Activated B cell treated with CpG ODN at 0.5 μM for 24 hours (primary cell): ENCODE measurements at regions of chr19 and their contacts with region 1.

Region 1: GRCh38 chr19:20923077-20923871 is at the start of gene ZNF85:
- DNase-seq: peak; percentile 76
- ATAC-seq: peak; percentile 97
- H3K4me3 Mint-ChIP-seq: peak within 1 kb of the TSS; percentile 98
- H3K27ac Mint-ChIP-seq: peak within 1 kb of the TSS; percentile 96
- H3K4me1 Mint-ChIP-seq: peaks cover 13% of the 10 kb centered on the region
- H3K27me3 Mint-ChIP-seq: no peaks in the 10 kb centered on the region
- CTCF ChIP-seq: no peak
- total RNA-seq, gene ZNF85: 15.0 and 18.1 TPM in 2 replicates

Region 2: GRCh38 chr19:20247016-20247683 is 676.1 kb before region 1 on chr19:
- CTCF ChIA-PET with region 1: no interaction called
- POLR2A ChIA-PET with region 1: no interaction called
- intact Hi-C with region 1: loop called (anchors 10 kb)
- DNase-seq: no peak
- ATAC-seq: no peak
- H3K4me3 Mint-ChIP-seq: no peak overlapping the region
- H3K27ac Mint-ChIP-seq: no peak overlapping the region
- H3K4me1 Mint-ChIP-seq: peaks cover 17% of the 10 kb centered on the region
- H3K27me3 Mint-ChIP-seq: no peaks in the 10 kb centered on the region
- CTCF ChIP-seq: no peak

Region 3: DNA sequence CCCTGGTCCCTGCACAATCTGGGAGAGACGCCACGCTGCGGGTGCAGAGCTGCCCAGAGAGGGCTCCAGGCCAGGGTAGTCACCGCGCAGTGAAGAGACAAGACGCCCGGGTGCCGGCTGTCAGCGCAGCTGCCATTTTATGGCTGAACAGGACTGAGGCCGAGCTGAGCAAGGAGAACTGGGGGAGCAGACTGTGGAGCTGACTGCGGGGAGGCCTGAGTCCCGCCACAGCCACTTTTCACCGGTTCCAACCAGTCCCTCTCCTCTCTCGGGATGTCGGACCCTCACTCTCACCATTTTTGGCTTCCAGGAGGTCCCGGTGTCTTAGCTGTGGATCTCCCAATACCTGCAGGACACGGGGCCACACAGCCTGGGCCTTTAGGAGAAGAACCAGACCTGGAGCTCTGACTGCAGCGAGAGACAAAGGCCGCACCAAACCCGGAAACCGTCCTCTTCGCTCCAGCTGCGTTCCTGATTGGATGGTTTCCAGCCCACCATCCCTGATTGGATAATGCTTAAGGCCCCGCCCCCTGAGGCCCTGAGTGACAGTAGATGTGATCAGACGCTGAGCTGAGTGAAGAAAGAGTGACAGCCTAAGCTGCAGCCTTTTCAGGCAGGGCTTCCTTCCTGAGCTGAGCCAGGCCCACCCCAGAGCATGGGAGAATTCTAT is 262.0 kb before region 1 on chr19 and contains the start of gene ZNF626:
- CTCF ChIA-PET with region 1: no interaction called
- POLR2A ChIA-PET with region 1: interaction called, 10 read pairs
- intact Hi-C with region 1: loop called (anchors 1 kb)
- DNase-seq: peak; percentile 80
- ATAC-seq: peak; percentile 98
- H3K4me3 Mint-ChIP-seq: peak within 1 kb of the TSS; percentile 95
- H3K27ac Mint-ChIP-seq: peak within 1 kb of the TSS; percentile 95
- H3K4me1 Mint-ChIP-seq: peaks cover 49% of the 10 kb centered on the region
- H3K27me3 Mint-ChIP-seq: no peaks in the 10 kb centered on the region
- CTCF ChIP-seq: no peak
- total RNA-seq, gene ZNF626: 16.1 and 17.2 TPM in 2 replicates

Region 4: GRCh38 chr19:20999731-21000352 is 76.6 kb after region 1 on chr19:
- CTCF ChIA-PET with region 1: no interaction called
- POLR2A ChIA-PET with region 1: interaction called, 13 read pairs
- intact Hi-C with region 1: loop called (anchors 1 kb)
- DNase-seq: peak; percentile 74
- ATAC-seq: peak; percentile 100
- H3K4me3 Mint-ChIP-seq: peak overlapping the region; percentile 91
- H3K27ac Mint-ChIP-seq: peak overlapping the region; percentile 70
- H3K4me1 Mint-ChIP-seq: peaks cover 6% of the 10 kb centered on the region
- H3K27me3 Mint-ChIP-seq: no peaks in the 10 kb centered on the region
- CTCF ChIP-seq: no peak

Region 5: DNA sequence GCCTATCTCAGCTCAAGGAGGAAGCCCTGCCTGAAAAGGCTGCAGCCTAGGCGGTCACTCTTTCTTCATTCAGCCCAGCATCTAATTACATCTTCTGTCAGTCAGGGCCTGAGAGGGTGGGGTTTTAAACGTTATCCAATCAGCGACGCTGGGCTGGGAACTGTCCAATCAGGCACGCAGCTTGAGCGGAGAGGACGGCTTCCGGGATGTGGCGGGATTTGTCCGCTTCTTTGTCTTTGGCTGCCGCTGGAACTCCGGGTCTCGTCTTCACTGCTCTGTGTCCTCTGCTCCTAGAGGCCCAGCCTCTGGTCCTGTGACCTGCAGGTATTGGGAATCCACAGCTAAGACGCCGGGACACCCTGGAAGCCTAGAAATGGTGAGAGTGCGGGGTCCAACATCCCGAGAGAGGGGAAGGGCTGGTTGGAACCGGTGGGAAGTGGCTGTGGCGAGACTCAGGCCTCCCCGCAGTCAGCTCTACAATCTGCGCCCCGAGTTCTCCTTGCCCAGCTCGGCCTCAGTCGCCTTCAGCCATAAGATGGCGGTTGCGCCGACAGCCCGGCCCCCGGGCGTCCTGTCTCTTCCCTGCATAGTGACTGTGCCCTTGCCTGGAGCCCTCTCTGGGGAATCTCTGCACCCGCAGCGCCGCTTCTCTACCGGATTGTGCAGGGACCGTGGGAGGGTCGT is 435.6 kb after region 1 on chr19 and contains the start of gene ZNF738:
- CTCF ChIA-PET with region 1: no interaction called
- POLR2A ChIA-PET with region 1: interaction called, 7 read pairs
- intact Hi-C with region 1: loop called (anchors 1 kb)
- DNase-seq: peak; percentile 70
- ATAC-seq: peak; percentile 96
- H3K4me3 Mint-ChIP-seq: peak within 1 kb of the TSS; percentile 100
- H3K27ac Mint-ChIP-seq: peak within 1 kb of the TSS; percentile 96
- H3K4me1 Mint-ChIP-seq: peaks cover 13% of the 10 kb centered on the region
- H3K27me3 Mint-ChIP-seq: no peaks in the 10 kb centered on the region
- CTCF ChIP-seq: no peak
- total RNA-seq, gene ZNF738: 18.7 and 22.2 TPM in 2 replicates

Region 6: GRCh38 chr19:21451187-21451586 is 527.9 kb after region 1 on chr19:
- CTCF ChIA-PET with region 1: no interaction called
- POLR2A ChIA-PET with region 1: no interaction called
- intact Hi-C with region 1: no loop called
- DNase-seq: no peak
- ATAC-seq: no peak
- H3K4me3 Mint-ChIP-seq: no peak overlapping the region
- H3K27ac Mint-ChIP-seq: no peak overlapping the region
- H3K4me1 Mint-ChIP-seq: no peaks in the 10 kb centered on the region
- H3K27me3 Mint-ChIP-seq: no peaks in the 10 kb centered on the region
- CTCF ChIP-seq: no peak

Region 7: DNA sequence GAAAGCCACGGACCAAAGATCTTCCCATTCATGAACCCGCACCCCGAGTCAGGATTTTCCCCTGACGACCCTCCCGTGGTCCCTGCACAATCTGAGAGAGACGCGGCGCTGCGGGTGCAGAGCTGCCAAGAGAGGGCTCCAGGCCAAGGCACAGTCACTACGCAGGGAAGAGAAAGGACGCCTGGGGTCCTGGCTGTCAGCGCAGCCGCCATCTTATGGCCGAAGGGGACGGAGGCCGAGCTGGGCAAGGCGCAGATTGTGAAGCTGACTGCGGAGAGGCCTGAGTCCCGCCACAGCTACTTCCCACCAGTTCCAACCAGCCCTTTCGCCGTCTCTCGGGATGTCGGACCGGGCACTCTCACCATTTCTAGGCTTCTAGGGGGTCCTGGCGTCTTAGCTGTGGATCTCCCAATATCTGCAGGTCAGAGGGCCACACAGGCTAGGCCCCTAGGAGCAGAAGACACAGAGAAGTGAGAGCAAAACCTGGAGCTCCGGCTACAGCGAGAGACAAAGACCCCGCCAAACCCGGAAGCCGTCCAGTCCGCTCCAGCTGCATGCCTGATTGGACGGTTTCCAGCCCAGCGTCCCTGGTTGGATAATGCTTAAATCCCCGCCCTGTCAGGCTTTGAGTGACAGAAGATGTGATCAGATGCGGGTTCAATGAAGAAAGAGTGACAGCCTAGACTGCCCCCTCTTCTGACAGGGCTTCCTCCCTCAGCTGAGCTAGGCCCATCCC is 844.0 kb after region 1 on chr19 and contains the start of gene ZNF100:
- CTCF ChIA-PET with region 1: no interaction called
- POLR2A ChIA-PET with region 1: no interaction called
- intact Hi-C with region 1: loop called (anchors 10 kb)
- DNase-seq: peak; percentile 70
- ATAC-seq: peak; percentile 98
- H3K4me3 Mint-ChIP-seq: peak within 1 kb of the TSS; percentile 95
- H3K27ac Mint-ChIP-seq: peak within 1 kb of the TSS; percentile 88
- H3K4me1 Mint-ChIP-seq: peaks cover 18% of the 10 kb centered on the region
- H3K27me3 Mint-ChIP-seq: no peaks in the 10 kb centered on the region
- CTCF ChIP-seq: no peak
- total RNA-seq, gene ZNF100: 21.1 and 22.4 TPM in 2 replicates